Activated T-helper 2 cell treated with anti-CD3 and anti-CD28 coated beads, Interferon-gamma antibody, Interleukin-2, Interleukin-4, amounts not matched to agents 10 μg/mL and 5 μg/mL and 100 μg/mL, durations not matched to agents 14 hours and 24 hours and 36 hours (primary cell): ENCODE measurements at regions of chr12 and their contacts with region 1.

Region 1: GRCh38 chr12:106919910-106920544 is 35.7 kb upstream of the TMEM263 start:
- DNase-seq: no peak
- H3K4me3 Mint-ChIP-seq: no peak overlapping the region
- H3K27ac Mint-ChIP-seq: no peak overlapping the region
- H3K4me1 Mint-ChIP-seq: peaks cover 14% of the 10 kb centered on the region
- H3K27me3 Mint-ChIP-seq: peaks cover 27% of the 10 kb centered on the region

Region 2: GRCh38 chr12:106223485-106224354 is 696.3 kb before region 1 on chr12:
- intact Hi-C with region 1: loop called (anchors 10 kb)
- DNase-seq: peak; percentile 65
- H3K4me3 Mint-ChIP-seq: no peak overlapping the region
- H3K27ac Mint-ChIP-seq: no peak overlapping the region
- H3K4me1 Mint-ChIP-seq: peaks cover 21% of the 10 kb centered on the region
- H3K27me3 Mint-ChIP-seq: peaks cover 6% of the 10 kb centered on the region

Region 3: DNA sequence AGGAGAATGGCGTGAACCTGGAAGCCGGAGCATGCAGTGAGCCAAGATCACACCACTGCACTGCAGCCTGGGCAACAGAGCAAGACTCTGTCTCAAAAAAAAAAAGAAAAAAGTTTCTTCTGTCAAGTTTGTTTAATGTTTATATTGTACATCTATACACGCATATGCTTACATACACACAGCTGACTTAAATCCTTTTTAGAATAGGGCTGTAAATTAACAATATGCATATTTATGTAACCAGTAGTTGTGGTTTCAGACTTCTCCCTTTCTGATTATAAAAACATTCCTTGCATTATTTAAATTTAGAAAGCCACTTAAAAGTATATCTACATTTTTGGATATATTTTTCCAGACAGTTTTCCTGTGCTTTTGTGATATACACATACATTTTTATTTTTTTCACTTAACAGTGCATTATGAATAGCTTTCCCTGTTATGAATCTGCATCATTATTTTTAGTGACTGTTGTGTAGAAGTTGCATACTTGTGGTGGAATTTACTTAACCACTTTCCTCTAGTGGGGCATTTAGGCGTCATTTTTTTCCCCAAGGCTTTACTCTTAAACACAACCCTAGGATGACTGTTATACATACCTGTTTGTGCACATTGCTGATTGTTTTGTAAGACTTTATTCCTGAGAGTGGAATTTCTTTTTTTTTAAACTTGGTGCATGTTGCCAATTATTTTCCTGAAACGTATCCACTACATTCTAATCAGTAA is 533.1 kb before region 1 on chr12:
- intact Hi-C with region 1: loop called (anchors 1 kb)
- DNase-seq: no peak
- H3K4me3 Mint-ChIP-seq: no peak overlapping the region
- H3K27ac Mint-ChIP-seq: no peak overlapping the region
- H3K4me1 Mint-ChIP-seq: peaks cover 5% of the 10 kb centered on the region
- H3K27me3 Mint-ChIP-seq: no peaks in the 10 kb centered on the region

Region 4: DNA sequence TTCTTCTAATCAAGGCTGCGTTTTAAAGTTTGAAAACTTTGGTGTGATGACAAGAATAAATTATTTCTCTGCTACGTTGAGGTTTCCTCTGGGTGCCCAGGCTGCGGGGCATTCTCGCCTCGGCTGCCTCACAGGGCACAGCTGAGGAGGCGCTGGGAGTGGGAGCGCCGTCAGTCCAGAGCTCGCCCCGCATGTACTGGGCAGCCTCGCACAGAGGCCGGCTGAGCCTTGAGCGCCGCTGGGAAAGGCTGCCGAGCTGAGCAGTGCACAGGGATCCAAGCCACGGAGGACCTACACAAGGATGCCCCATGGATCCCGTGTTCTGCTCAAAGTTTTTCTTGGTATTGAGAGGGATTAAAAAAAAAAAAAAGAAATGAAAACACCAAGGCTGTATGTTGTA is 325.6 kb before region 1 on chr12:
- intact Hi-C with region 1: loop called (anchors 5 kb)
- DNase-seq: no peak
- H3K4me3 Mint-ChIP-seq: no peak overlapping the region
- H3K27ac Mint-ChIP-seq: no peak overlapping the region
- H3K4me1 Mint-ChIP-seq: peaks cover 3% of the 10 kb centered on the region
- H3K27me3 Mint-ChIP-seq: peaks cover 62% of the 10 kb centered on the region

Region 5: GRCh38 chr12:106682592-106683234 is 237.3 kb before region 1 on chr12:
- intact Hi-C with region 1: loop called (anchors 2 kb)
- DNase-seq: no peak
- H3K4me3 Mint-ChIP-seq: no peak overlapping the region
- H3K27ac Mint-ChIP-seq: no peak overlapping the region
- H3K4me1 Mint-ChIP-seq: no peaks in the 10 kb centered on the region
- H3K27me3 Mint-ChIP-seq: peaks cover 1% of the 10 kb centered on the region